CD4-positive, alpha-beta memory T cell (primary cell): ENCODE measurements at regions of chr22 and their contacts with region 1.

Region 1: GRCh38 chr22:30326706-30327362 is at the start of gene TBC1D10A:
- DNase-seq: peak; percentile 92 to 94 (median 93)
- H3K4me3 ChIP-seq: peak within 1 kb of the TSS; percentile 76 to 78
- H3K4me3 Mint-ChIP-seq: peak within 1 kb of the TSS; percentile 90 to 95 (median 93)
- H3K27ac ChIP-seq: peak within 1 kb of the TSS; percentile 83
- H3K27ac Mint-ChIP-seq: peak within 1 kb of the TSS; percentile 90 to 97 (median 93)
- H3K4me1 ChIP-seq: peaks cover 50% of the 10 kb centered on the region
- H3K4me1 Mint-ChIP-seq: peaks cover 37 to 54% (median 45%) of the 10 kb centered on the region in 4 donors
- H3K27me3 ChIP-seq: no peaks in the 10 kb centered on the region
- H3K27me3 Mint-ChIP-seq: no peaks in the 10 kb centered on the region
- total RNA-seq, gene TBC1D10A: 62.2 to 76.8 TPM

Region 2: GRCh38 chr22:30262917-30263741 is 63.7 kb before region 1 on chr22:
- CTCF ChIA-PET with region 1: no interaction called
- POLR2A ChIA-PET with region 1: interaction called, 3 read pairs
- intact Hi-C with region 1: loop called (anchors 2 kb)
- DNase-seq: peak; percentile 64 to 76 (median 68)
- H3K4me3 ChIP-seq: peak overlapping the region in 1 of 2 donors; percentile 24
- H3K4me3 Mint-ChIP-seq: peak overlapping the region; percentile 70 to 83 (median 74)
- H3K27ac ChIP-seq: peak overlapping the region; percentile 36
- H3K27ac Mint-ChIP-seq: peak overlapping the region; percentile 61 to 90 (median 86)
- H3K4me1 ChIP-seq: peaks cover 48% of the 10 kb centered on the region
- H3K4me1 Mint-ChIP-seq: peaks cover 24 to 56% (median 42%) of the 10 kb centered on the region in 4 donors
- H3K27me3 ChIP-seq: no peaks in the 10 kb centered on the region
- H3K27me3 Mint-ChIP-seq: no peaks in the 10 kb centered on the region

Region 3: GRCh38 chr22:30314915-30315314 is 11.9 kb before region 1 on chr22:
- CTCF ChIA-PET with region 1: interaction called, 12 read pairs
- POLR2A ChIA-PET with region 1: interaction called, 562 read pairs
- intact Hi-C with region 1: loop called (anchors 1 kb)
- DNase-seq: peak in 2 of 5 donors; percentile 38 to 83
- H3K4me3 ChIP-seq: no peak overlapping the region
- H3K4me3 Mint-ChIP-seq: peak overlapping the region in 7 of 8 donors; percentile 39 to 79 (median 52)
- H3K27ac ChIP-seq: peak overlapping the region; percentile 44
- H3K27ac Mint-ChIP-seq: peak overlapping the region; percentile 82 to 95 (median 89)
- H3K4me1 ChIP-seq: peaks cover 99% of the 10 kb centered on the region
- H3K4me1 Mint-ChIP-seq: peaks cover 86 to 100% (median 93%) of the 10 kb centered on the region in 4 donors
- H3K27me3 ChIP-seq: no peaks in the 10 kb centered on the region
- H3K27me3 Mint-ChIP-seq: no peaks in the 10 kb centered on the region

Region 4: DNA sequence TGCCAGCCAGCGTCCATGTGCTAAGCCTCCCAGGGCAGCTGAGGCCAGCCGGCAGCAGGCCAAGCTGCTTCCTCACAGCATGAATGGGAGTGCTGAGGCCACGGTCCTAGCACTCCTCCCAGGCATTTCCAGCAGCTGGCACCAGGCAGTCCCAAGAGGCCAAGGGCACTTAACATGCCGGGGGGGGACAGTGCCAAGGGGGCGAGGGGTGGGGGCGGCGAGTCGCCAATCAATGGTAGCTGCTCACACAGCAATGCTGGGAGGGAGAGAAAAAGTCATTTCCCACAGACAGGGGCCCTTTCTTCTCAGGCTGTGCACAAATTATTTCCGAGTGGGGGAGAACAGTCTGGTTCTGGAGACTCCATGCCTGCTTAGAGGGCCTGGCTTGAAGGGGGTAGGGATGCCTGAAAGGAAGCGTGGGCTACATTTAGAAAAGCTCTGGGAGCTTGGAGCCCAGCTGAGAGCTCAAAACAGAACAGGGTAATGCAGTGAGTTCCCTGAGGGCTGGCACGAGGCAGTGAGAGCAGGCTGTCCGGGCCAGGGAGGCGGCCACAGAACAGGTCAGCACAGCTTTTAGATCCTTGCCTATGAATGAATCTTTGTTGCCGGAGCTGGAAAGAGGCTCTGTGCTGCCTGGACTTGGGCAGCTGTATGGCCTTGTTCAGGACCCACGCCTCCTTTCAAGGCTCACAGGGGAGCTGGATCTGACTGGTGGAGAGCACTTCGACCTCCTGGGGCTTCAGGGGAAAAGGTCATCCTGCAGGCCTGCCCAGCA is 14.3 kb after region 1 on chr22:
- CTCF ChIA-PET with region 1: interaction called, 4 read pairs
- POLR2A ChIA-PET with region 1: interaction called, 25 read pairs
- intact Hi-C with region 1: no loop called
- DNase-seq: no peak
- H3K4me3 ChIP-seq: no peak overlapping the region
- H3K4me3 Mint-ChIP-seq: no peak overlapping the region
- H3K27ac ChIP-seq: no peak overlapping the region
- H3K27ac Mint-ChIP-seq: no peak overlapping the region
- H3K4me1 ChIP-seq: peaks cover 22% of the 10 kb centered on the region
- H3K4me1 Mint-ChIP-seq: peaks cover 12 to 18% (median 16%) of the 10 kb centered on the region in 4 donors
- H3K27me3 ChIP-seq: no peaks in the 10 kb centered on the region
- H3K27me3 Mint-ChIP-seq: no peaks in the 10 kb centered on the region